ENCODE measurements at regions of chr5 and their contacts with region 1.

Region 1: DNA sequence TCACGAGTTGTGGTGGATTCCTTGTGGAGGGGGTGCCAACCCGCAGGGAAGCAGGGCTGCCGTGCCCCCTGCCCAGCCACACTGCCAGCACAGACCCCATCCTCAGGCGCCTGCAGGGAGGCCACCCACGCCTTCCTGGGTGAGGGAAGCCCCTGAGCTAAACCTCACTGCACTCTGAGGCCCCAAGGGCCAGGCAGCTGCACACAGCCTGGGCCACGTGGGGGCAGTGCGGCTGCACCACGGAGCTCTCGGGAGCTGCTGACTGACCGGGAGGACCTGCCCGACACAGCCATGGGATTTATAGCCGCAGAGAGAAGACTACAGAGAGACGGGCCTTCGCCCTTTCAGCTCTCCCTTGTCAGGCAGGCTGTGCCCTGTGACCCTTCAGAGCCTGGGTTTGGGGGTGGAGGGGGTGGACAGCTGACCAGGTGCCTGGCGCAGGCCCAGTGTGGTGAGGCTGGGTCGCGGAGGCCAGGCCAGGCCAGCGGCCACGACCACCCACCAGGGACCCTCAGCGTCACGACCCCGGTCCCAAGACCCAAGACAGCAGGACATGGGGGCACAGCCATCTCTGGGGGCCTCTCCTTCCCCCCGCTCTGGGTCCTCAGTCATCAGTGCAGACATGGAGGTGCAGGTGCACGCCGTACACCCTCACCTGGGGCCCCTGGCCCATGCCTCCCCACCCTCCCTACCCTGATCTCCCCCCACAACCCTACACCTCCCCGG is 4.3 kb upstream of the AHRR start:
- DNase-seq: peak; percentile 40
- ATAC-seq: peak; percentile 75
- H3K4me3 ChIP-seq: no peak overlapping the region
- H3K4me3 Mint-ChIP-seq: no peak overlapping the region
- H3K27ac ChIP-seq: no peak overlapping the region
- H3K27ac Mint-ChIP-seq: no peak overlapping the region
- H3K4me1 ChIP-seq: peaks cover 20% of the 10 kb centered on the region in 2 donors
- H3K4me1 Mint-ChIP-seq: peaks cover 14% of the 10 kb centered on the region
- H3K27me3 ChIP-seq: peaks cover 0 to 30% (median 15%) of the 10 kb centered on the region in 4 experiments
- H3K27me3 Mint-ChIP-seq: peaks cover 9% of the 10 kb centered on the region
- CTCF ChIP-seq: peak; percentile 29

Region 2: GRCh38 chr5:231661-232060 is 85.6 kb before region 1 on chr5:
- CTCF ChIA-PET with region 1: no interaction called
- POLR2A ChIA-PET with region 1: no interaction called
- intact Hi-C with region 1: no loop called
- DNase-seq: no peak
- ATAC-seq: no peak
- H3K4me3 ChIP-seq: no peak overlapping the region
- H3K4me3 Mint-ChIP-seq: no peak overlapping the region
- H3K27ac ChIP-seq: no peak overlapping the region
- H3K27ac Mint-ChIP-seq: no peak overlapping the region
- H3K4me1 ChIP-seq: no peaks in the 10 kb centered on the region
- H3K4me1 Mint-ChIP-seq: no peaks in the 10 kb centered on the region
- H3K27me3 ChIP-seq: no peaks in the 10 kb centered on the region
- H3K27me3 Mint-ChIP-seq: no peaks in the 10 kb centered on the region
- CTCF ChIP-seq: no peak

Region 3: GRCh38 chr5:424301-425110 is 107.3 kb after region 1 on chr5:
- CTCF ChIA-PET with region 1: interaction called, 41 read pairs
- POLR2A ChIA-PET with region 1: no interaction called
- intact Hi-C with region 1: no loop called
- DNase-seq: no peak
- ATAC-seq: peak; percentile 17
- H3K4me3 ChIP-seq: peak overlapping the region in 1 of 5 experiments; percentile 2
- H3K4me3 Mint-ChIP-seq: no peak overlapping the region
- H3K27ac ChIP-seq: no peak overlapping the region
- H3K27ac Mint-ChIP-seq: no peak overlapping the region
- H3K4me1 ChIP-seq: peaks cover 5 to 12% of the 10 kb centered on the region in 2 donors
- H3K4me1 Mint-ChIP-seq: peaks cover 14% of the 10 kb centered on the region
- H3K27me3 ChIP-seq: peaks cover 0 to 3% (median 0%) of the 10 kb centered on the region in 4 experiments
- H3K27me3 Mint-ChIP-seq: no peaks in the 10 kb centered on the region
- CTCF ChIP-seq: no peak

Region 4: DNA sequence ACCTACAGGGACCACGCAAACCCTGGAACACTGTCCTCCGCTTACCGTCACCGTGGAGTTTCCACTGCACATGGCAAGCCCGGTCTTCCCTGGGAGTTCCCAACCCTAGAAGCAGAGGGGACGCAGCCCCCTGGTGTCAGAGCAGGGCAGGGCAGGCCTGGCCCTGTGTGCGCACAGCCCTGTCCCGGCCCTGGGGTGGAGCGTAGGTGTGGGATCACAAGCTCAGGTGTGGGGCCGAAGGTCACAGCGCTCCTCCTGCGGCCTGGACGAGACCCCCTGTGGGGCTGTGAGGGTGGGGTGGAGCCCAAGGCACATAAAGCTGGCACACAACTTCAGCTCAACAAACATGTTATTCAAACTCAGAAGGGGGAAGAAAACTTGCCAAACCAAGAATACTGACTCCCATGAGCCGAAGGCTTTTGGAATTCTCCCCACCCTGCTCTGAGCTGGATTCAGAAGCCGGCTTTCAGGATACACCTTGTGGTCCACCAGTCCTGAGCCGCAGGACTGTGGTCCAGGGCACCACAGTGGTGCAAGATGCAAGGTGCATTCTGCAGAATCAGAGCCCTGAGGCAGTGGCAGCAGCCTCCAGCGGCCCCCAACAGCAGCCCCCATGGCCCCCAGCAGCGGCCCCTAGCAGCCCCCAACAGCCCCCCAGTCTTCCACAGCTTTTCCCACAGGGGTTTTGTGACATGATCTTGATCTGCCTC is 113.9 kb after region 1 on chr5:
- CTCF ChIA-PET with region 1: interaction called, 41 read pairs
- POLR2A ChIA-PET with region 1: no interaction called
- intact Hi-C with region 1: no loop called
- DNase-seq: peak; percentile 46
- ATAC-seq: peak; percentile 88
- H3K4me3 ChIP-seq: no peak overlapping the region
- H3K4me3 Mint-ChIP-seq: no peak overlapping the region
- H3K27ac ChIP-seq: no peak overlapping the region
- H3K27ac Mint-ChIP-seq: no peak overlapping the region
- H3K4me1 ChIP-seq: no peaks in the 10 kb centered on the region
- H3K4me1 Mint-ChIP-seq: no peaks in the 10 kb centered on the region
- H3K27me3 ChIP-seq: peaks cover 0 to 10% (median 2%) of the 10 kb centered on the region in 4 experiments
- H3K27me3 Mint-ChIP-seq: peaks cover 12% of the 10 kb centered on the region
- CTCF ChIP-seq: peak; percentile 67

Region 5: GRCh38 chr5:442335-443238 is 125.3 kb after region 1 on chr5 and contains the start of gene EXOC3:
- CTCF ChIA-PET with region 1: interaction called, 19 read pairs
- POLR2A ChIA-PET with region 1: no interaction called
- intact Hi-C with region 1: no loop called
- DNase-seq: peak; percentile 82
- ATAC-seq: peak; percentile 91
- H3K4me3 ChIP-seq: peak within 1 kb of the TSS; percentile 53 to 91 (median 89)
- H3K4me3 Mint-ChIP-seq: peak within 1 kb of the TSS; percentile 96
- H3K27ac ChIP-seq: peak within 1 kb of the TSS; percentile 56 to 81
- H3K27ac Mint-ChIP-seq: peak within 1 kb of the TSS; percentile 90
- H3K4me1 ChIP-seq: peaks cover 6 to 19% of the 10 kb centered on the region in 2 donors
- H3K4me1 Mint-ChIP-seq: peaks cover 30% of the 10 kb centered on the region
- H3K27me3 ChIP-seq: no peaks in the 10 kb centered on the region
- H3K27me3 Mint-ChIP-seq: no peaks in the 10 kb centered on the region
- CTCF ChIP-seq: no peak
- total RNA-seq, gene EXOC3: 92.6 and 97.1 TPM in 2 replicates

Region 6: GRCh38 chr5:513216-514100 is 196.2 kb after region 1 on chr5:
- CTCF ChIA-PET with region 1: no interaction called
- POLR2A ChIA-PET with region 1: no interaction called
- intact Hi-C with region 1: no loop called
- DNase-seq: no peak
- ATAC-seq: no peak
- H3K4me3 ChIP-seq: no peak overlapping the region
- H3K4me3 Mint-ChIP-seq: no peak overlapping the region
- H3K27ac ChIP-seq: no peak overlapping the region
- H3K27ac Mint-ChIP-seq: peak overlapping the region; percentile 13
- H3K4me1 ChIP-seq: no peaks in the 10 kb centered on the region
- H3K4me1 Mint-ChIP-seq: no peaks in the 10 kb centered on the region
- H3K27me3 ChIP-seq: peaks cover 0 to 40% (median 12%) of the 10 kb centered on the region in 4 experiments
- H3K27me3 Mint-ChIP-seq: peaks cover 51% of the 10 kb centered on the region
- CTCF ChIP-seq: no peak

Measured in B cell (primary cell).